ENCODE measurements at regions of chr1 and their contacts with region 1.

Region 1: DNA sequence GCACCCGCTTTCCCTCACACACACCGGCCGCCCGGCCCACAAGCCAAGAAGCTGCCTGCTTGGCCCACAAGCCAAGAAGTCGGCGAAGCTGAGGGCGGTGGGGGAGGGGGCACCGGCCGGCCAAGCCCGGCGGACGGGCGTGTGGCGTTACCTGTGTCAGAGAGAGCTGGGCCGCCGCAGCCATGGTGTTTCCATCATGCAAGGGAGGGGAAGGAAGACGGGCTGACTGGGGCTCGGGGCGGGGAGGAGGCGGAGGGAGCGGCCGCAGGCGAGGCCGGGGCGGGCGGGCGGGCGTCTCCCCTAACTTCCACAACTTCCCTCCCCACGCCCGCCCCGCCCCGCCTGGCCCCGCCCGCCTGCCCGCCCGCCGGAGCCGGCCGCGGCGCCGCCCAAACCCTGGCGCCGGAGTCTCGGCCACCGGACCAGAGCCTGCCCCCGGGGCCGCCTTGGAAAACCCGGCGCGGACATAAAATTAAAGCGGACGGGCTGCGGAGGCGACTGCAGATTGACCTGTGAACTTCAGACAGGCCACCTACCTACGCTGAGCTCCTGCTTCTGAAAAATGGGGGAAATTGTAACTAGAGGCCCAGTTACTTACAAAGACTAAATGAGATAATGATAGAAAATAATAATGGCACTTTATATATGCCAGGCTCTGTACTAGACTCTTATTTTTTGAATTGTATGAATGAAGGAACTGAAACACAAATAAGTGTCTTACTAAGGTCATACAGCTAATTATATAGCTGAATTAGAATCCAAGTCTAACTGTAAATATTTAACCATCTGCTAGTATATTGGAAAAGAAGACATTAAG is at the start of gene EPS15:
- DNase-seq: peak; percentile 84
- ATAC-seq: peak; percentile 79
- H3K4me3 Mint-ChIP-seq: peak within 1 kb of the TSS; percentile 97
- H3K27ac Mint-ChIP-seq: peak within 1 kb of the TSS; percentile 87
- H3K4me1 Mint-ChIP-seq: peaks cover 55% of the 10 kb centered on the region
- H3K27me3 Mint-ChIP-seq: no peaks in the 10 kb centered on the region
- CTCF ChIP-seq: no peak
- total RNA-seq, gene EPS15: 150 and 151 TPM in 2 replicates

Region 2: DNA sequence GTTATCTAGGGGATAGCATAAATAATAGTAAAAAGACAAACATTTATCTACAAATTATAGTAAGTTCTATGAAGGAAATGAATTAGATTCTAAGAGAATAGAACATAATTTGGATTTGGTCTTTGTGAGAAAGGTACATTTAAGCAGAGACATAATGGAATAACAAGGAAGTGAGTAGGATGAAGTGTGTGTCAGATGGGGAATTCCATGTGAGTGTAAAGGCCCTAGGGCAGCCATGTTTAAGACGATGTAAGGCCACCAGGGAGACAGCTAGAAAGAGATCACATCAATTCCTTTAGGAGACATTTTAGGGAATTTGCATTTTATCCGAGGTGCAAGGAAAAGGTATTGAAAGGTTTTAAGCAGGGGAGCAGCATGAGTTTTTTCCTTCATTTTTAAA is 1444.3 kb before region 1 on chr1:
- CTCF ChIA-PET with region 1: no interaction called
- POLR2A ChIA-PET with region 1: no interaction called
- intact Hi-C with region 1: no loop called
- DNase-seq: no peak
- ATAC-seq: no peak
- H3K4me3 Mint-ChIP-seq: no peak overlapping the region
- H3K27ac Mint-ChIP-seq: no peak overlapping the region
- H3K4me1 Mint-ChIP-seq: no peaks in the 10 kb centered on the region
- H3K27me3 Mint-ChIP-seq: no peaks in the 10 kb centered on the region
- CTCF ChIP-seq: no peak

Region 3: DNA sequence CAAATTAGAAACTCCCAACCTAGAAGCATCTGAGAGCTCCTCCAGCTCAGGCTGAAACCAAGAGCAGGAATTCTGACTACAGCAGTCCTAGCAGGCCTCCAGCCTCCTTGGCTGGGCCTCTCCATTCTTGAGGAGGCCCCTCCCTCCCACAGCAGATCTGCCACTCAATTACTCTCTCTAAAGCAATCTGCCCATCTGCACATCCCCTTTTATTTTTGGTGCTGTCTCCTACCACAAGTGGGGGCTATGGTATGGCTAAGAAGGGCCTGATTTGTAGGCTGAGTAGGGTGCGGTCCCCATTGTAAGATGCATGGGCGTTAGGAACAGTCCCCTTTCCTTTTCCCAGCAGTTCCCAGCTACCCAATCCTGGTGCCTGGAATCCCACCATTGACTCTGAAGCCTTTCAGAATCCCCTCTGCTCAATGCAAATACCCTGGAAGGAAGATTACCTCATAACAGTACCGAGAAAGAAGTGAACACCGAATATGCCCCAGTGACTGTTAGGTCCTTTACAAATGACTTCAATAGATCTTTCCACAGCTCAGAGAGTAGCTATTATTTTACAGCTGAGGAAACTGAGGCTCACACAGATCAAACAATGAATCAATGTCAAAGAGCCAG is 177.3 kb before region 1 on chr1:
- CTCF ChIA-PET with region 1: no interaction called
- POLR2A ChIA-PET with region 1: no interaction called
- intact Hi-C with region 1: no loop called
- DNase-seq: no peak
- ATAC-seq: peak; percentile 52
- H3K4me3 Mint-ChIP-seq: no peak overlapping the region
- H3K27ac Mint-ChIP-seq: no peak overlapping the region
- H3K4me1 Mint-ChIP-seq: peaks cover 3% of the 10 kb centered on the region
- H3K27me3 Mint-ChIP-seq: peaks cover 28% of the 10 kb centered on the region
- CTCF ChIP-seq: no peak

Region 4: GRCh38 chr1:51354416-51354815 is 164.8 kb before region 1 on chr1:
- CTCF ChIA-PET with region 1: no interaction called
- POLR2A ChIA-PET with region 1: no interaction called
- intact Hi-C with region 1: no loop called
- DNase-seq: no peak
- ATAC-seq: no peak
- H3K4me3 Mint-ChIP-seq: no peak overlapping the region
- H3K27ac Mint-ChIP-seq: no peak overlapping the region
- H3K4me1 Mint-ChIP-seq: no peaks in the 10 kb centered on the region
- H3K27me3 Mint-ChIP-seq: no peaks in the 10 kb centered on the region
- CTCF ChIP-seq: no peak

Region 5: DNA sequence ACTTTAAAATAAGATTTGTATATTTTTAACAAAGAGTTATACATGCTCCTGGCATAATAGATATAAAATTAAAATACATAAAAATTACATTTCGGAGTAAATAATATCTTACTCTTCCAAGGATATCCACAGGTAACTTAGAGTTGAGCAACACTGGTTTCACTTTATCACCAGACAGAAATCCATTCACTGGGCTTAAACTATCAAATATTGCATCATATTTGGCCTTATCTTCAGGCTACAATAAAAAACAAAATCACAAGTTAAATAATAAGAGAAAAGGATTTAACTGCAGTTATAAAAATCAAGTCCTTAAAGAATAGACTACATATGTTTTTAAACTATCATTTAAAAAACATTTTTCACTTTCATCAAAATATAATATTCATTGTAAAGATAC is 55.7 kb before region 1 on chr1:
- CTCF ChIA-PET with region 1: no interaction called
- POLR2A ChIA-PET with region 1: interaction called, 6 read pairs
- intact Hi-C with region 1: loop called (anchors 2 kb)
- DNase-seq: no peak
- ATAC-seq: no peak
- H3K4me3 Mint-ChIP-seq: no peak overlapping the region
- H3K27ac Mint-ChIP-seq: no peak overlapping the region
- H3K4me1 Mint-ChIP-seq: no peaks in the 10 kb centered on the region
- H3K27me3 Mint-ChIP-seq: no peaks in the 10 kb centered on the region
- CTCF ChIP-seq: no peak

Region 6: DNA sequence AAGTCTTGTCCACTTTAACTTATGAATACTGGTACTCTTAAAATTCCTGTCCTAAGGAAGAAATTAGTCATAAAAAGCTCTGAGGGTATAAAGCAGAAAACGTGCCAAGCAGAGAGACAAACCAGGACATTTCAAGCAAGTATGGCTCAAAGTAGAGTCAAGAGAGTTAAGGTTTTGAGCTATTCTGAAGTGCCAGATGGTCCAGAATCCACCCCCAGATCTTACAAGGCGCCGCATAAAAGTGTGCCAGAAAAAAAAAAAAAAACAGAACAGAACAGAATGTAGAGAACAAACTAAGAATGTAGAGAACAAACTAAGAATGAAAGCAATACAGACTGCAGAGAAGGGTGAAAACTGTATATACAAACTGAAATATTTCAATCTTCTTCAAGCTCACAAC is 12.7 kb before region 1 on chr1:
- CTCF ChIA-PET with region 1: interaction called, 5 read pairs
- POLR2A ChIA-PET with region 1: interaction called, 88 read pairs
- intact Hi-C with region 1: loop called (anchors 1 kb)
- DNase-seq: no peak
- ATAC-seq: peak; percentile 22
- H3K4me3 Mint-ChIP-seq: peak overlapping the region; percentile 52
- H3K27ac Mint-ChIP-seq: peak overlapping the region; percentile 62
- H3K4me1 Mint-ChIP-seq: peaks cover 83% of the 10 kb centered on the region
- H3K27me3 Mint-ChIP-seq: no peaks in the 10 kb centered on the region
- CTCF ChIP-seq: no peak

Region 7: GRCh38 chr1:51569284-51570062 is 50.2 kb after region 1 on chr1:
- CTCF ChIA-PET with region 1: no interaction called
- POLR2A ChIA-PET with region 1: interaction called, 12 read pairs
- intact Hi-C with region 1: loop called (anchors 2 kb)
- DNase-seq: no peak
- ATAC-seq: peak; percentile 53
- H3K4me3 Mint-ChIP-seq: peak overlapping the region; percentile 78
- H3K27ac Mint-ChIP-seq: peak overlapping the region; percentile 95
- H3K4me1 Mint-ChIP-seq: peaks cover 54% of the 10 kb centered on the region
- H3K27me3 Mint-ChIP-seq: no peaks in the 10 kb centered on the region
- CTCF ChIP-seq: no peak

Region 8: GRCh38 chr1:51616901-51617708 is 97.8 kb after region 1 on chr1 and contains the start of gene OSBPL9:
- CTCF ChIA-PET with region 1: no interaction called
- POLR2A ChIA-PET with region 1: interaction called, 8 read pairs
- intact Hi-C with region 1: loop called (anchors 1 kb)
- DNase-seq: peak; percentile 64
- ATAC-seq: peak; percentile 95
- H3K4me3 Mint-ChIP-seq: peak within 1 kb of the TSS; percentile 99
- H3K27ac Mint-ChIP-seq: peak within 1 kb of the TSS; percentile 94
- H3K4me1 Mint-ChIP-seq: peaks cover 32% of the 10 kb centered on the region
- H3K27me3 Mint-ChIP-seq: no peaks in the 10 kb centered on the region
- CTCF ChIP-seq: no peak
- total RNA-seq, gene OSBPL9: 58.2 and 63.7 TPM in 2 replicates

Region 9: DNA sequence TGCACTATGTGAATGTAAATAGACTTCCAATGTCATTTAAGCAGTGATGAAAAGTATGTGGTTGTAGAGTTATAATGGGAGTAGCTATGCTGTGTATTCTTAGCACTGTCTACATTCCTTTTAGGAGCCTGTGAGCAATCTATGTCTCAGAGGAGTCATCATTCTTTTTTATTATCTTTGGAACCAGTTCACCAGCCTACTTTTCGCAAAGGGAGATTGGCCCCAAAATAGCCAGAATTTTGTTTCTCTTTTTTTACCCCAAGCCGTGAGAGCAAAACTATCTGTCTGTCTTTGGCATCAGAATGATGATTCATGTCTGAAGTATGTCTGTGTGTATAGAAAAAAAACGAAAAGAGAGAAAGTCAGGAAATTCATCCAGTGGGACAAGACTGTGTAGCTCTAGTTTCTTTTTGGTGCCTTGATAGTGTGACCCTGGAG is 141.8 kb after region 1 on chr1:
- CTCF ChIA-PET with region 1: no interaction called
- POLR2A ChIA-PET with region 1: no interaction called
- intact Hi-C with region 1: no loop called
- DNase-seq: no peak
- ATAC-seq: no peak
- H3K4me3 Mint-ChIP-seq: no peak overlapping the region
- H3K27ac Mint-ChIP-seq: no peak overlapping the region
- H3K4me1 Mint-ChIP-seq: peaks cover 13% of the 10 kb centered on the region
- H3K27me3 Mint-ChIP-seq: no peaks in the 10 kb centered on the region
- CTCF ChIP-seq: no peak

Region 10: GRCh38 chr1:51768971-51769588 is 249.8 kb after region 1 on chr1:
- CTCF ChIA-PET with region 1: interaction called, 3 read pairs
- POLR2A ChIA-PET with region 1: no interaction called
- intact Hi-C with region 1: loop called (anchors 1 kb)
- DNase-seq: no peak
- ATAC-seq: peak; percentile 73
- H3K4me3 Mint-ChIP-seq: no peak overlapping the region
- H3K27ac Mint-ChIP-seq: peak overlapping the region; percentile 8
- H3K4me1 Mint-ChIP-seq: peaks cover 10% of the 10 kb centered on the region
- H3K27me3 Mint-ChIP-seq: no peaks in the 10 kb centered on the region
- CTCF ChIP-seq: no peak

Measured in activated B cell treated with CpG ODN at 0.5 μM for 24 hours (primary cell).